HEK293T (cell line): ENCODE measurements at regions of chr10 and their contacts with region 1.

Region 1: GRCh38 chr10:60646966-60647796 is 131.1 kb upstream of the CDK1 start:
- DNase-seq: peak; percentile 35

Region 2: GRCh38 chr10:60444494-60445064 is 202.6 kb before region 1 on chr10:
- CTCF ChIA-PET with region 1: interaction called, 12 read pairs
- POLR2A ChIA-PET with region 1: no interaction called
- DNase-seq: no peak